Sciatic nerve (tissue), 2 donors: ENCODE measurements at regions of chr14 and their contacts with region 1.

Region 1: DNA sequence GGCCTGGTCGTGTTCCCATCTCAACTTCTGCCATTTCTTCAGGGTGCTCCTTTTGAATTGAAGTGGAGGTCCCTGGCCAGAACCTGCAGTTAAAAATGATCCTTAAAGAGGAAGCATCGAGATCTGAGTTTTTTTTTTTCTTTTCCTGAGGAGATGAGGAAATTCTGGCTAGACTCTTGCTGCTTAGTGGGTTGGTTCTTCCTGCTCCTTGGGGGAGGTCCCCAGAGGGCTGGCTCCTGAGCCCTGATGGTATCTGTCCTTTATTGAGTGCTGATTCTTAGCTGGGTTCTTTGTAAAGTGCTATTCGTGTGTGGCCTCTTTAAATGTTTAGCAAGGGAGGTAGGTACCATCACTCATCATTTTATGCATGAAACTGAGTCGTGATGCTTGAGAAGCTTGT is 11.7 kb downstream of the PELI2 start:
- DNase-seq: no peak
- ATAC-seq: peak; percentile 63

Region 2: DNA sequence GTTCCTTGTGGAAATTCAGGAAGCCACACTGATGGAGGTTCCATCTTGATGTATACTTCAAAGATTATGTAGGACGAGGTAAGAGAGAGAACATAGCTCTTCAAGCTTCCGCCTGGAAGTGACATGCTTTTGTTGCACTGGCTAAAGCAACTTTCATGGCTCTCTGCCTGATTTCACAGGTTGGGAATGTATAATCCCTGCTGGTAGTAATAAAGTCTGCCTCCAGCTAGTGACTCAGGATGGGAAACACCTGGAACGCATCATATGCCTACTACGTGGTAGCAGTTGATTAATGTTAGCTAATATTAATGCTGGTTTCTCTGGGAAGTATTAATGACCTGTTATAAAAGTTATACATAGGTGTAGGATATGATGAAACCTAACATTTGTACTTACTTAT is 59.4 kb after region 1 on chr14:
- intact Hi-C with region 1: loop called (anchors 10 kb)
- DNase-seq: no peak
- ATAC-seq: no peak